Caco-2 (cell line): ENCODE measurements at regions of chr3 and their contacts with region 1.

Region 1: DNA sequence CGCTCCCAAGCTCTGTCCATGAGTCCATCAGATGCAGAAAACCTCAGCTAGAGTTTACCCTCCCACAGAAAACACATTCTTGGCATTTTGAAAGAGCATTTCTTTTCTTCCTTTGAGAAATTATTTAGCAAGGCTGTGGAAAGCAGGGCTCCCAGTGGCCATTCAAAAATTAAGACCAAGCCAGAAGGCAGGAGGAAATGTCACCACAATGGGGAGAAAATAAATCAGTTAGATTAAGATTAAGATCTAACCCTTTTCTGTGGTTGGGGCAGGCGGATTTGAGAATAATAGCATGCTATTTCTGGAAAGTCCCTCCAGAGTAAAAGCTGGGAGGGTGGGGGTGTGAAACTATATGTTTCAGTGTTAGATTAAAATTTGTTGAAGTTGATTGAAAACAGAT is 20.2 kb downstream of the LRIG1 start:
- DNase-seq: no peak
- H3K4me3 ChIP-seq: no peak overlapping the region
- H3K4me3 Mint-ChIP-seq: peak overlapping the region; percentile 58
- H3K27ac Mint-ChIP-seq: peak overlapping the region; percentile 85
- H3K4me1 ChIP-seq: peaks cover 95% of the 10 kb centered on the region
- H3K4me1 Mint-ChIP-seq: peaks cover 60% of the 10 kb centered on the region
- H3K27me3 ChIP-seq: no peaks in the 10 kb centered on the region
- H3K27me3 Mint-ChIP-seq: no peaks in the 10 kb centered on the region
- CTCF ChIP-seq: no peak

Region 2: GRCh38 chr3:66220602-66221377 is 259.9 kb before region 1 on chr3 and contains the start of gene SLC25A26:
- CTCF ChIA-PET with region 1: no interaction called
- POLR2A ChIA-PET with region 1: no interaction called
- intact Hi-C with region 1: no loop called
- DNase-seq: peak; percentile 95 to 97
- H3K4me3 ChIP-seq: peak within 1 kb of the TSS; percentile 72
- H3K4me3 Mint-ChIP-seq: peak within 1 kb of the TSS; percentile 85
- H3K27ac Mint-ChIP-seq: peak within 1 kb of the TSS; percentile 81
- H3K4me1 ChIP-seq: no peaks in the 10 kb centered on the region; the same call in 1 of the 2 replicates
- H3K4me1 Mint-ChIP-seq: peaks cover 17% of the 10 kb centered on the region
- H3K27me3 ChIP-seq: no peaks in the 10 kb centered on the region
- H3K27me3 Mint-ChIP-seq: no peaks in the 10 kb centered on the region
- CTCF ChIP-seq: no peak
- total RNA-seq, gene SLC25A26: 25.4 and 26.3 TPM in 2 replicates

Region 3: GRCh38 chr3:66464512-66464894 is 16.2 kb before region 1 on chr3:
- CTCF ChIA-PET with region 1: no interaction called
- POLR2A ChIA-PET with region 1: no interaction called
- intact Hi-C with region 1: loop called (anchors 1 kb)
- DNase-seq: no peak
- H3K4me3 ChIP-seq: no peak overlapping the region
- H3K4me3 Mint-ChIP-seq: no peak overlapping the region
- H3K27ac Mint-ChIP-seq: peak overlapping the region; percentile 19
- H3K4me1 ChIP-seq: peaks cover 34% of the 10 kb centered on the region
- H3K4me1 Mint-ChIP-seq: peaks cover 23% of the 10 kb centered on the region
- H3K27me3 ChIP-seq: no peaks in the 10 kb centered on the region
- H3K27me3 Mint-ChIP-seq: no peaks in the 10 kb centered on the region
- CTCF ChIP-seq: no peak

Region 4: GRCh38 chr3:66495646-66496045 is 15.0 kb after region 1 on chr3:
- CTCF ChIA-PET with region 1: no interaction called
- POLR2A ChIA-PET with region 1: interaction called, 3 read pairs
- intact Hi-C with region 1: loop called (anchors 1 kb)
- DNase-seq: peak; percentile 45 to 57
- H3K4me3 ChIP-seq: no peak overlapping the region
- H3K4me3 Mint-ChIP-seq: peak overlapping the region; percentile 39
- H3K27ac Mint-ChIP-seq: peak overlapping the region; percentile 29
- H3K4me1 ChIP-seq: peaks cover 74% of the 10 kb centered on the region
- H3K4me1 Mint-ChIP-seq: peaks cover 48% of the 10 kb centered on the region
- H3K27me3 ChIP-seq: no peaks in the 10 kb centered on the region
- H3K27me3 Mint-ChIP-seq: no peaks in the 10 kb centered on the region
- CTCF ChIP-seq: no peak

Region 5: DNA sequence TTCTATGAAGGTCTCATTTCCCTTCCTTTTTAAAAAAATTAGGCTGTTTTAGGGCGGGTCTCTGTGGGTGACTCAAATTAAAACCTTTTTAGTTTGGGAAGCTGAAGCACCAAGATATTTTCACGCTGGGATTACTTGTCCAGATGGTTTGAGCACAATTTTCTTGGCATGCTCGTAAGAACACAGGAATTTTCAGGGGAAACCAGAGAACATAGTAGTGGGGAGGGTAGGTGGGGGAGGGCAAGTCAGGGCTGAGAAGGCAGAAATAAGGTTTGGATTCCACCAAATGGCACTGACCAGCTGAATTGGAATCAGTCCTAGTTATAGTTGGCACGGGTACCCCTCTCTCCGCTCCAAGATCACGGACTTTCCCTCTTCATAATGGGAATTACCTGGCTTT is 117.5 kb after region 1 on chr3:
- CTCF ChIA-PET with region 1: no interaction called
- POLR2A ChIA-PET with region 1: no interaction called
- intact Hi-C with region 1: no loop called
- DNase-seq: no peak
- H3K4me3 ChIP-seq: no peak overlapping the region
- H3K4me3 Mint-ChIP-seq: no peak overlapping the region
- H3K27ac Mint-ChIP-seq: no peak overlapping the region
- H3K4me1 ChIP-seq: peaks cover 7% of the 10 kb centered on the region
- H3K4me1 Mint-ChIP-seq: peaks cover 6% of the 10 kb centered on the region
- H3K27me3 ChIP-seq: no peaks in the 10 kb centered on the region
- H3K27me3 Mint-ChIP-seq: no peaks in the 10 kb centered on the region
- CTCF ChIP-seq: no peak

Region 6: DNA sequence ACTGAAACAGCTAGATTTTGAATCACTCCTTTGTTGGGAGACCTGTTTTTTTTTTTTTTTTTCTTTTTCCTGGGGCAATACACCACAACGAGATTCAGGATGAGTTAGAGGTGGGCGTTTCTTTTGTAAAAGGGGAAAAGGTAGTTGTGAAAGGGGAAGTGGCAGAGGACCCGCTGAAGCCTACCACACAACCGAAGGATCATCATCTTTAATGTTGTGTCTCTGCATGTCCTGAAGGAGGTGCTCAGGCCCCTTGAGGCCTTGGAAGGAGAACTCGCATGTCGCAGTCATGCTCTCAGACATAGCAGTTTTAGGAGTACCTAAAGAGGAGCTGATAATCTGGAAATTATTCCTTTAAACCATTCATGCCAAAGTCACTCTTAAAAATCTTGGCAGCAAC is 158.1 kb after region 1 on chr3:
- CTCF ChIA-PET with region 1: no interaction called
- POLR2A ChIA-PET with region 1: no interaction called
- intact Hi-C with region 1: loop called (anchors 1 kb)
- DNase-seq: no peak
- H3K4me3 ChIP-seq: no peak overlapping the region
- H3K4me3 Mint-ChIP-seq: no peak overlapping the region
- H3K27ac Mint-ChIP-seq: no peak overlapping the region
- H3K4me1 ChIP-seq: peaks cover 10% of the 10 kb centered on the region
- H3K4me1 Mint-ChIP-seq: no peaks in the 10 kb centered on the region
- H3K27me3 ChIP-seq: no peaks in the 10 kb centered on the region
- H3K27me3 Mint-ChIP-seq: no peaks in the 10 kb centered on the region
- CTCF ChIP-seq: no peak